Posterior cingulate gyrus (tissue), 11 donors: ENCODE measurements at regions of chr20 and their contacts with region 1.

Region 1: GRCh38 chr20:23606652-23607049 is 934 bp upstream of the CST9 start:
- DNase-seq: peak; percentile 50 to 96 (median 81)

Region 2: GRCh38 chr20:23441850-23442313 is 164.8 kb before region 1 on chr20:
- intact Hi-C with region 1: loop called (anchors 1 kb)
- DNase-seq: peak in 8 of 10 donors; percentile 32 to 95 (median 76)